ENCODE measurements at regions of chr1 and their contacts with region 1.

Region 1: DNA sequence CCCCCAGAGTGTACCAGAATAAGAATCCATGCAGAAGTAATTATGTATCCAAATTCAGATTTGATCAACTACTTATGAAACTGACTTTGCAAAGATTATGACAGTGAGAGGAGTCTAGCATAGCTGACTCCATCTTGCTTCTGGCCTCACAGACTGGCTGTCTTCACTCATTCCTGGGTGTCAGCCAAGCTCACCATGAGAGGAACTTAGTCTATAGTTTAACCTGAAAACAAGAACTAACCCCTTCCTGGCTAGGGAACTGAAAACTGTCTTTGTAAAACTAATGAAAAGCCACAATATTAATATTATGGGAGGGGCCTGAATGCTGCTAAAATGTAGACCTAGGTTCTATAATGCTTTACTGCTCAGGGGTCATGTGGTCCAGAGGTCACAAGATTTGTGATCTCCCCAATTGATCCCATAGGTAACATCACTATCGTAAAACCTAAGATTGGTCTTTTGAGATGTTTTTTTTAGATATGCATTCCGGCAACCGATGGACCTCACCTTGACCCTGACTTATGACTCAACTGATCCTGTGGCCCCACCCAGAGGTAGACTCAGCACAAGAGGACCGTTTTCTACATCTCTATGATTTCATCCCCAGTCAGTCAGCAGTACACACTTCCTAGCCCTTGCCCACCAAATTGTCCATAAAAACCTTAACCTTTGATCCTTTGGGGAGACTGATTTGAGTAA is 55.2 kb downstream of the ATP1B1 start:
- DNase-seq: no peak
- H3K4me3 Mint-ChIP-seq: no peak overlapping the region
- H3K27ac Mint-ChIP-seq: no peak overlapping the region
- H3K4me1 Mint-ChIP-seq: peaks cover 8% of the 10 kb centered on the region
- H3K27me3 Mint-ChIP-seq: no peaks in the 10 kb centered on the region

Region 2: DNA sequence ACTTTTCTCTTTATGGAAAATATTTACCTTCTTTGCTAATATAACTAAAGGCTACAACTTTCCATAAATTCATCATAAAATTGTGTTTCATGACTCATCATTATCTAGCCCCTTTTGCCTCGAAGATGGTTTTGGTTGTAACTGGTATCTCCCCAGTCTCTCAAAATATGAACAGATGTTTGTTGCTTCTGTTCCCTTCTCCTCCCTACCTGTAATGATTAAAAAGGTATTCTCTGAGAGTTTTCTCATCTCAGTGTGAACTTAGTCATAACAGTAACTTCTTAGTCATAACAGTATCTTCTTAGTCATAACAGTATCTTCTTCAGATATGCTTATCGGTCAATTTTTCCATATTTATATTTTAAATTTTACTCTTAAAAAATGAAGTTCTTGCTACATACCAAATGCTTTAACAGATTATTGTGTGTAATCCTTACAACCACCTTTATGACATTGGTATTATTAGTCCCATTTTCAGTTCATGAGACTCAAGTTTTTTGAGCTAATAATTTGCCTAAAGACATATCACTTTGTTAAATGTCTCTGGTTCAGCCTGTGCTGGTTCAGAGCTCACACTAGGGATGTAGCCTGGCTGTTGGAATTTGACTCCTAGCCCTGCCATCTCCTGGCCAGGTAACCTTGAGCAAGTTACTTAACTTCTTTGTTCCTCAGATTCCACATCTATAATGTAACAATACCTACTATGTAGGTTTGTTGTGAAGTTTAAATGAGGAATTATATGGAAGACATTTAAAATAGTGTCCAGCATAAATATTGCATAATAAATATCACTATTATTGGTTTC is 22.6 kb before region 1 on chr1:
- intact Hi-C with region 1: loop called (anchors 2 kb)
- DNase-seq: no peak
- H3K4me3 Mint-ChIP-seq: no peak overlapping the region
- H3K27ac Mint-ChIP-seq: peak overlapping the region; percentile 56
- H3K4me1 Mint-ChIP-seq: peaks cover 12% of the 10 kb centered on the region
- H3K27me3 Mint-ChIP-seq: no peaks in the 10 kb centered on the region